ENCODE measurements at regions of chr16 and their contacts with region 1.

Region 1: GRCh38 chr16:87369796-87370719 is 13.5 kb downstream of the FBXO31 start:
- DNase-seq: no peak
- H3K4me3 ChIP-seq: no peak overlapping the region
- H3K27ac ChIP-seq: peak overlapping the region; percentile 34
- H3K4me1 ChIP-seq: no peaks in the 10 kb centered on the region
- H3K27me3 ChIP-seq: no peaks in the 10 kb centered on the region
- CTCF ChIP-seq: no peak

Region 2: GRCh38 chr16:87344931-87345631 is 25.0 kb before region 1 on chr16:
- CTCF ChIA-PET with region 1: no interaction called
- POLR2A ChIA-PET with region 1: interaction called, 14 read pairs
- intact Hi-C with region 1: no loop called
- DNase-seq: peak; percentile 37
- H3K4me3 ChIP-seq: no peak overlapping the region
- H3K27ac ChIP-seq: peak overlapping the region; percentile 59
- H3K4me1 ChIP-seq: peaks cover 7% of the 10 kb centered on the region
- H3K27me3 ChIP-seq: no peaks in the 10 kb centered on the region
- CTCF ChIP-seq: no peak

Region 3: DNA sequence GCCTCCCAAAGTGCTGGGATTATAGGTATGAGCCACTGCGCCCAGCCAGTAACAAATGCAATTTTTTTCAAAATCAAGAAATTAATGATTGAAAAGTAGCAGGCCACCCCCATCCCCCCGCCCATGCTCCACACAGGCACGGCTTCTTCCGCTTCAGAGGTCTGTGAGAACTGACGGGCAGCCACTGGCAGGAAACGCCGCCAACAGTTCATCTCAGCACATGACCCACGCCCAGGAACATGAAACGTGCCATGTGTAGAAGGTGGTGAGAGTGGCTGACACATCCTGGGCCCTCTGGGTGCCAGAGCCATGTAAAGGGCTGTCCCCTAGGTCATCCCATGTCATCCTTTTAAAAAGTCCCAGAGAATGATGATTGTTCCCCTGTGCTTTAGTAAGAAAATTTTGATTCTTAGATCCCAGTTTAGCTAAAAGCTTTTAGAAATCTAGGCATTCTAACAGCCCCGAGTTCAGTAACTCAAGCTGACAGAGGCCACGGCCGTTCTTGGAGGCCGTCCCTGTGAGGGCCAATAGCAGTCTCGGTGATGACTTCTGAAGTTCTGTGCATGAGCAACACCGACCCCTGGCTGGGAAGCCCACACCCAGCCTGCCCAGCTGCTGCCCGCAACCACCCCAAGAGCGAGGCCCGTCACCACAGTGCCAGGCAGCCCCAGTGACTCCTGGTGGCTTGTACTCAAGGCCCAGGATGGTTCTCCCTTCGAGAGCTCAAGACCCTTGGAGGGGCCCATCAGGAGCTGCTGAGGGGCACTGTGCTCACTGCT is 343.6 kb after region 1 on chr16:
- CTCF ChIA-PET with region 1: no interaction called
- POLR2A ChIA-PET with region 1: no interaction called
- intact Hi-C with region 1: no loop called
- DNase-seq: no peak
- H3K4me3 ChIP-seq: no peak overlapping the region
- H3K27ac ChIP-seq: no peak overlapping the region
- H3K4me1 ChIP-seq: no peaks in the 10 kb centered on the region
- H3K27me3 ChIP-seq: no peaks in the 10 kb centered on the region
- CTCF ChIP-seq: no peak